Activated CD4-positive, alpha-beta T cell treated with anti-CD3 and anti-CD28 coated beads, Interleukin-2, amount 10 ng/mL, durations not matched to agents 24 days and 14 days (primary cell): ENCODE measurements at regions of chr6 and their contacts with region 1.

Region 1: DNA sequence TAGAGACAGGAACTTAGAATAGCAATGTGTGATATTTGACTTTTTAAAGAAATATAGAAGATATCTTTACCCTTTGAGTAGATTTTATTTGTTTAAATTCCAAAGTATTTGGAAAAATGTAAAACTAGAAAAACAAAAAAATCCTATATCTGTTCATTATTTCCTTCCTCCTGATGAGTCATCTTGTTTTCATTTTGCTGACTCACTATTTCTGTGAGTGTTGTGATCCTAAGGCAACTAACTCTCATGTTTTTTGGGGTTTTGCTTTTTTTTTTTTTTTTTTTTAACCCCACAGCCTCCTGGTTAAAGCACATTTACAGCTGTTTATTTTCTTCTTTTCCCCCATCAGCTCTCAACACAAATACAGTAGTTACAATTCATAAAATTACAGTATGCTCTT is 37.8 kb upstream of the THEMIS start:
- DNase-seq: no peak
- H3K4me3 Mint-ChIP-seq: no peak overlapping the region
- H3K27ac Mint-ChIP-seq: peak overlapping the region; percentile 61
- H3K4me1 Mint-ChIP-seq: peaks cover 46% of the 10 kb centered on the region
- H3K27me3 Mint-ChIP-seq: no peaks in the 10 kb centered on the region

Region 2: GRCh38 chr6:127918506-127919427 is 19.9 kb before region 1 on chr6:
- intact Hi-C with region 1: loop called (anchors 2 kb)
- DNase-seq: peak; percentile 79
- H3K4me3 Mint-ChIP-seq: peak overlapping the region; percentile 52
- H3K27ac Mint-ChIP-seq: peak overlapping the region; percentile 61
- H3K4me1 Mint-ChIP-seq: peaks cover 55% of the 10 kb centered on the region
- H3K27me3 Mint-ChIP-seq: no peaks in the 10 kb centered on the region

Region 3: DNA sequence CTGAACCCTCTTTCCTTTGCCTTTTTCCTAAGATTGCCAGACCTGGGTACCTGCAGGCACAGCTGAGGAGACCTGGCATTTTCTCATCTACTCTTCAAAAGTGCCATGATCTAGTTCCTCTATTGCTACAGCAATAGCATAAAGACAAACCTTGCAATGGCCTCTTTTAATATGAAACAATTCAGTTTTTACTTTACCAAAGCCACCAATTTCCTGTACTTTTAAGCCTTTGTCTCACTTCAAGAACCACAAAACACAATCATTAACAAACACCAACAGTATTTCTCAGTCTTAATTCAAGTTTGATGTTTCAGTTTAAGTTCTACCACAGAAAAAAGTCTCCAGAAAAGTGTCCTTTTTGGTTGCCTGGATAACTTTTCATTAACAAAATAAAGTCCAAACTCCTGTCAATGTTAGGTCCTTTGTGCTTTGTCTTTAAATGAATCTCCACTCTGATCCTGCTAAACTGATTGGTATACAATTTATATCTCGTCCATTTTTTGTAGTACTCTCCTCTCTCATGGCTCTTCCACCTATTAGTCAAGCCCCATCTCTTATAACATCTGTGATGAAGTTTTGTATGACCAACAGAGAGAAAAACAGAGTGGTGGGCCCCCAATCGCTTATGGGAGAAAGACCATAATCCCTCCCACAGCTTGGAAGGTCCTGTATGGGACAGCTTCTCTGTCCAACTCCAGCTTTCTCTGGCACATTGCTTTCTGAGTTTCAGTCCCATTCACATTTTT is 12.6 kb after region 1 on chr6:
- intact Hi-C with region 1: loop called (anchors 1 kb)
- DNase-seq: peak; percentile 67
- H3K4me3 Mint-ChIP-seq: peak overlapping the region; percentile 67
- H3K27ac Mint-ChIP-seq: peak overlapping the region; percentile 95
- H3K4me1 Mint-ChIP-seq: peaks cover 56% of the 10 kb centered on the region
- H3K27me3 Mint-ChIP-seq: no peaks in the 10 kb centered on the region